Panc1 (cell line): ENCODE measurements at regions of chr12 and their contacts with region 1.

Region 1: DNA sequence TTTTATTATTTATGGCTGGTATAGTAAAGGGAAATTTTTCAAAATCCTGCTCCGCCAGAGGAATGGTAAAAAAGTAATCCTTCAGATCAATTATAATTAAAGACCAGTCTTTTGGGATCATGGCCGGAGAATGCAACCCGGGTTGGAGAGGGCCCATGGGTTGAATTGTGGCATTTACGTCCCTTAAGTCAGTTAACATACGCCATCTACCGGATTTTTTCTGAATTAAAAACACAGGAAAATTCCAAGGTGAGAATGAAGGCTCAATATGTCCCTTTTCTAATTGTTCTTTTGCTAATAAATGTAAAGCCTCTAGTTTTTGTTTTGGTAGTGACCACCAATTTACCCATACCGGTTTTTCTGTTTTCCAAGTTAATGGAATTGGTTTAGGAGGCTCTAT is 602.8 kb downstream of the ALG10 start:
- DNase-seq: peak; percentile 25
- ATAC-seq: peak; percentile 80
- H3K4me3 ChIP-seq: no peak overlapping the region
- H3K27ac ChIP-seq: no peak overlapping the region
- H3K4me1 ChIP-seq: no peaks in the 10 kb centered on the region
- H3K27me3 ChIP-seq: no peaks in the 10 kb centered on the region
- CTCF ChIP-seq: peak; percentile 64; the same call in 1 of the 2 replicates

Region 2: DNA sequence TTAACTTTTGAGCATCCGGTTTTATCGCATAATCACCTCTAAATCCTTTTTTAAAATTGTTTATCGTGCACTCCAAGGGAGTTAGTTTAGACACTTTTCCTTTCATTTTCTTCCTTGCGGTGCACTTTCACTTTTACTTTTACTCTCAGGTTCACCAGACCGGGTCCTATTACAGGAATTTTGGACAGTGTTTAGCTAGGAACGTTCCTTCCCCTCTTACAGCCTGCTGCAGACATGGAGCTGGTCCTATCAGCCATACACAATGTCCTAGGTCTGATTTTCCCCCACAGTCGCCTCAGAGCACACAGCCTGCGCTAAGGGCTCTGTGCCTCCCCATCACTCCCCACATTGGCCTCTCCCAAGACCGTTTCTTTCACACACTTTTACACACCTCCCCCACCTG is 498.9 kb before region 1 on chr12:
- CTCF ChIA-PET with region 1: no interaction called
- POLR2A ChIA-PET with region 1: no interaction called
- in situ Hi-C with region 1: no loop called
- intact Hi-C with region 1: loop called (anchors 5 kb)
- DNase-seq: no peak
- ATAC-seq: peak; percentile 66; the same call in 1 of the 2 replicates
- H3K4me3 ChIP-seq: peak overlapping the region; percentile 10 to 46
- H3K27ac ChIP-seq: peak overlapping the region; percentile 1; the same call in 1 of the 2 replicates
- H3K4me1 ChIP-seq: no peaks in the 10 kb centered on the region
- H3K27me3 ChIP-seq: no peaks in the 10 kb centered on the region
- CTCF ChIP-seq: no peak

Region 3: GRCh38 chr12:34292736-34293625 is 332.1 kb before region 1 on chr12:
- CTCF ChIA-PET with region 1: no interaction called
- POLR2A ChIA-PET with region 1: no interaction called
- in situ Hi-C with region 1: no loop called
- intact Hi-C with region 1: no loop called
- DNase-seq: peak; percentile 20
- ATAC-seq: peak; percentile 82
- H3K4me3 ChIP-seq: 0 out of 4 replicates have a peak overlapping the region, but pooled peaks of 1 of the 2 experiments have one; percentile 16
- H3K27ac ChIP-seq: no peak overlapping the region
- H3K4me1 ChIP-seq: peaks cover 20% of the 10 kb centered on the region
- H3K27me3 ChIP-seq: no peaks in the 10 kb centered on the region; the same call in 1 of the 2 replicates
- CTCF ChIP-seq: peak; percentile 81

Region 4: GRCh38 chr12:34347367-34347766 is 277.7 kb before region 1 on chr12:
- CTCF ChIA-PET with region 1: no interaction called
- POLR2A ChIA-PET with region 1: no interaction called
- in situ Hi-C with region 1: no loop called
- intact Hi-C with region 1: loop called (anchors 2 kb)
- DNase-seq: no peak
- ATAC-seq: peak; percentile 65
- H3K4me3 ChIP-seq: peak overlapping the region; percentile 38 to 68
- H3K27ac ChIP-seq: peak overlapping the region; percentile 36; the same call in 1 of the 2 replicates
- H3K4me1 ChIP-seq: peaks cover 64% of the 10 kb centered on the region
- H3K27me3 ChIP-seq: no peaks in the 10 kb centered on the region; the same call in 1 of the 2 replicates
- CTCF ChIP-seq: peak; percentile 96

Region 5: GRCh38 chr12:34399631-34400410 is 225.3 kb before region 1 on chr12:
- CTCF ChIA-PET with region 1: no interaction called
- POLR2A ChIA-PET with region 1: no interaction called
- in situ Hi-C with region 1: no loop called
- intact Hi-C with region 1: loop called (anchors 10 kb)
- DNase-seq: no peak
- ATAC-seq: no peak
- H3K4me3 ChIP-seq: no peak overlapping the region
- H3K27ac ChIP-seq: no peak overlapping the region
- H3K4me1 ChIP-seq: no peaks in the 10 kb centered on the region
- H3K27me3 ChIP-seq: peaks cover 28% of the 10 kb centered on the region; the same call in 1 of the 2 replicates
- CTCF ChIP-seq: no peak

Region 6: DNA sequence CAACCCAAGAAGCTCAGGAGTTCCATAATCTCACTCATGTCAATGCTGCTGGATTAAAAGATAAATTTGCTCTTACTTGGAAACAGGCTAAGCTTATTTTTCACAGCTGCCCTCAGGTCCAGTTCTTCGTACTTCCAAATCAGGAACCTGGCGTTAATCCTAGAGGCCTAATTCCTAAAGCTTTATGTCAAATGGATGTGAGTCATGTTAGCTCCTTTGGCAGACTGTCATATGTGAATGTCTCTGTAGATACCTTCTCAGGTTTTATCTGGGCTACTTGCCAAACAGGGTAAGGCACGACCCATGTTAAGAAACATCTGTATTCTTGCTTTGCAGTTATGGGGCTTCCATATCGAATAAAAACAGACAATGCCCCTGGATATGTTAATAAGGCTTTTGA is 98.2 kb before region 1 on chr12:
- CTCF ChIA-PET with region 1: no interaction called
- POLR2A ChIA-PET with region 1: no interaction called
- in situ Hi-C with region 1: no loop called
- intact Hi-C with region 1: no loop called
- DNase-seq: peak; percentile 13
- ATAC-seq: no peak
- H3K4me3 ChIP-seq: no peak overlapping the region
- H3K27ac ChIP-seq: no peak overlapping the region
- H3K4me1 ChIP-seq: no peaks in the 10 kb centered on the region
- H3K27me3 ChIP-seq: no peaks in the 10 kb centered on the region
- CTCF ChIP-seq: no peak

Region 7: DNA sequence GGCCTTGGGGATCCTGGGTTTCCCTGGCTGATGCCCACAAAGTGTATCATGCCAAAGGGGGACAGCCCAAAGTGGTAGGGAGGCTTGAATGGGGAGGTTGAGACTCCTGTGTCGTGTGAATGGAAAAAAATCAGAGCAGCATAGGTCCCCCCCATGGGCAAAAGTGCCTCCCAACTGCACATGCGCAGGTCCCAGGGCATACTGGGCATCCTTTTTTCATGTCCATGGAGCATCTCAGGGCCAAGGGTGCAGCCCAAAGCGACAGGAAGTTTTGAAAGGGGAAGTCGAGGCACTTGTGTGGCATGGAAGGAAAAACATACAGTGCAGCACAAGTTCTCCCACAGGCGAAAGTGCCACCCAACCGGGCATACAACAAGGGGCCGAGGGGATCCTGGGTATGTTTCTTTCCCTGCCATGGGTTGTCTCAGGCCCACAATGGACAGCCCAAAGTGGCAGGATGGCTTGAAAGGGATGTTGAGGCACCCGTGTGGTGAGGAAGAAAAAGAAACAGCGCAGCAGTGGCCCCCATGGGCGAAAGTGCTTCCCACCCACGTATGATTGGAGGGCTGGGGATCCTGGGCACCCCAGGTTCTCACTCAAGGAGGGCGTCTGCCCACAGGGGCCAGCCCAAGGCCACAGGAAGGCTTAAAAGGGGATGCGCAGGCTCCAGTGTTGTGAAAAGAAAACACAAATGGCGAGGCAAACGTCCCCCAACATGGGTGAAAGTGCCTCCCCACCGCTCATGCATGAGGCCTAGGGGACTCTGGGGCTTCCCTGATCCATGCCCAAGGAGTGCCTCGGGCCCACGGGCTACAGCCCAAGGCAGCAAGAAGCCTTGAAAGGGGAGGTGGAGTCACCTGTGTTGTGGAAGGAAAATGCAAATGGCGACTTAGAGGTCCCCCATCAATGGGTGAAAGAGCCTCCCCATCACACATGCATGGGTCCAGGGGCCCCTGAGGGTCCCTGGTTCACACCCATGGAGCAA is 29.1 kb before region 1 on chr12:
- CTCF ChIA-PET with region 1: no interaction called
- POLR2A ChIA-PET with region 1: no interaction called
- in situ Hi-C with region 1: no loop called
- intact Hi-C with region 1: no loop called
- DNase-seq: no peak
- ATAC-seq: no peak
- H3K4me3 ChIP-seq: no peak overlapping the region
- H3K27ac ChIP-seq: no peak overlapping the region
- H3K4me1 ChIP-seq: peaks cover 6% of the 10 kb centered on the region
- H3K27me3 ChIP-seq: no peaks in the 10 kb centered on the region; the same call in 1 of the 2 replicates
- CTCF ChIP-seq: no peak